ENCODE measurements at regions of chr5 and their contacts with region 1.

Region 1: GRCh38 chr5:137754126-137754960 is at the start of gene HNRNPA0:
- DNase-seq: peak; percentile 95
- ATAC-seq: peak; percentile 82
- H3K4me3 Mint-ChIP-seq: peak within 1 kb of the TSS; percentile 95
- H3K27ac Mint-ChIP-seq: peak within 1 kb of the TSS; percentile 100
- H3K4me1 Mint-ChIP-seq: peaks cover 35% of the 10 kb centered on the region
- H3K27me3 Mint-ChIP-seq: no peaks in the 10 kb centered on the region
- CTCF ChIP-seq: no peak
- total RNA-seq, gene HNRNPA0: 31.2 and 34.7 TPM in 2 replicates

Region 2: DNA sequence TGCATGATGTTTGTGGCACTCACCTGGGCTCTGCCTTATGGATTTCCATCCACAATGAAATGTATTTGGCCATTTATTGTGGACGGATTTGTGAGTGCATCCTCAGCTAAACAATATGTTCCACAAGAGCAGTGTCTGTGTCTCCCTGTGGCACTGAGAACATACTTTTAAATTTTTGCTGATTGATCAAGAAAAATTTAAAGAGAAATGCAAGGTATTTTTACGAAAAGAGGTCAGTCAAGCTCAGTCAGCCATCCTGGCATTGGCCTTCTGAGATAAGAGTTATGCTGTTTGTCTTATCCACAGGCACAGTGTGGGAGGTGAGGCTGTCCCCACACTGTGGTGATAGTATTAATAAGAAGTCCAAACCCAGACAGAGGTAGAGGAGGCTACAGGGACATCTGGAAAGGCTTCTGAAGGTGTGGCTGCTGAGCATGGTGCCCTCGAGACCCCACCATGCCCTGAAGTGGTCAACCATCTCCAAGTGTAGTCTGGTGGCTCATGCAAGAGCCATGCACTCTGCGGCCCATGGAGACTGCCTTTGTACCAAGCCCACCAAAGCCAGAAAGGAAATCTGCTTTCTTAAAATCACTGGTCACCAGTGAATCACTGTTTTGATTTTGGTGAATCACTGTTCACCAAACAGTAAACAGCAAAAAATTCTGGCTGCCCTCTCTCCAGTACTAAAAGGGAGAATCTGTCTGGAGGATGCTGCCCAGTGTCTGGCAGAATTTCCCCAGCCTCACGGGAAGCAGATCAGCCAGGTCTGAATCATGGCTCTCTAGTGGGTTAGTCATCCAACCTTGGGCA is 284.0 kb before region 1 on chr5:
- CTCF ChIA-PET with region 1: no interaction called
- POLR2A ChIA-PET with region 1: no interaction called
- intact Hi-C with region 1: no loop called
- DNase-seq: no peak
- ATAC-seq: no peak
- H3K4me3 Mint-ChIP-seq: no peak overlapping the region
- H3K27ac Mint-ChIP-seq: no peak overlapping the region
- H3K4me1 Mint-ChIP-seq: no peaks in the 10 kb centered on the region
- H3K27me3 Mint-ChIP-seq: peaks cover 23% of the 10 kb centered on the region
- CTCF ChIP-seq: no peak

Region 3: GRCh38 chr5:137743031-137743640 is 11.2 kb before region 1 on chr5:
- CTCF ChIA-PET with region 1: interaction called, 12 read pairs
- POLR2A ChIA-PET with region 1: interaction called, 9 read pairs
- intact Hi-C with region 1: no loop called
- DNase-seq: no peak
- ATAC-seq: peak; percentile 88
- H3K4me3 Mint-ChIP-seq: no peak overlapping the region
- H3K27ac Mint-ChIP-seq: no peak overlapping the region
- H3K4me1 Mint-ChIP-seq: peaks cover 4% of the 10 kb centered on the region
- H3K27me3 Mint-ChIP-seq: no peaks in the 10 kb centered on the region
- CTCF ChIP-seq: no peak

Region 4: GRCh38 chr5:137847687-137848086 is 93.3 kb after region 1 on chr5:
- CTCF ChIA-PET with region 1: no interaction called
- POLR2A ChIA-PET with region 1: no interaction called
- intact Hi-C with region 1: no loop called
- DNase-seq: no peak
- ATAC-seq: no peak
- H3K4me3 Mint-ChIP-seq: no peak overlapping the region
- H3K27ac Mint-ChIP-seq: no peak overlapping the region
- H3K4me1 Mint-ChIP-seq: peaks cover 5% of the 10 kb centered on the region
- H3K27me3 Mint-ChIP-seq: no peaks in the 10 kb centered on the region
- CTCF ChIP-seq: no peak

Region 5: GRCh38 chr5:138024117-138024516 is 269.8 kb after region 1 on chr5:
- CTCF ChIA-PET with region 1: no interaction called
- POLR2A ChIA-PET with region 1: interaction called, 7 read pairs
- intact Hi-C with region 1: loop called (anchors 1 kb)
- DNase-seq: no peak
- ATAC-seq: no peak
- H3K4me3 Mint-ChIP-seq: no peak overlapping the region
- H3K27ac Mint-ChIP-seq: no peak overlapping the region
- H3K4me1 Mint-ChIP-seq: peaks cover 78% of the 10 kb centered on the region
- H3K27me3 Mint-ChIP-seq: no peaks in the 10 kb centered on the region
- CTCF ChIP-seq: no peak

Region 6: DNA sequence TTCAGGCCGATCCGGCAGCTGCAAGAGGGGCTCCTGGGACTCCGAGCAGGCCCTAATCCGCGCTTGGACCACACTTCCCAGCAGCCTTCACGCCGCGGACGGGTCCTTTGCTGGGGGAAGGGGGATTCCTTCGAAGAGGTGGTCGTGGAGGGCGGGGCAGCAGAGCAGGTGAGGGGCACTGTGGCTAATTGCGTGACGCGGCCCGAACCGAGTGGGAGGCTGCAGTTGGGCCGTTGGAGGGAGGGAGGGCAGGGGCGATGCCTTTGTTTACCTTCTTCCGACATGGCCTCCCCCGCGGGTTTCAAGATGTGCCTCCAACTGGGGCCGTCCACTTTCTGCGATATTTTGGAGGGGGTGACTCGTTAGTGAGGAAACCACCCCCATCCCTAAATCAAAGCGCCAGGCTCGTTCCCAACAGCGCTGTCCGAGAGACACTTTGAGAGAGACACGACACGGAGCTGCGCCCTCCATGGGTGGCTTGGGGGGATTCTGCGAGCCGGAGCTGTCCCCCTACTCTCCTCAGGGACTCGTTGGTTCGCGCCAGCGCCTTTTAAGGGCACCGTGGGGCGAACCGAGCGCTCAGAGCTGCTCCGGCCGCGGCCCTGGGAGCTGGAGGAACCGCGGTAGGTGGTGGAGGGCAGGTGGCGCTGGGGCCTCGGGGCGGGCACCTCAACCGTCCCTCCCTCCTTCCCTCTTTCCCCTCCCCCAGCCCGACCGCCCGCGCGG is 583.5 kb after region 1 on chr5 and contains the start of gene FAM53C:
- CTCF ChIA-PET with region 1: no interaction called
- POLR2A ChIA-PET with region 1: interaction called, 8 read pairs
- intact Hi-C with region 1: loop called (anchors 2 kb)
- DNase-seq: peak; percentile 97
- ATAC-seq: peak; percentile 81
- H3K4me3 Mint-ChIP-seq: peak within 1 kb of the TSS; percentile 90
- H3K27ac Mint-ChIP-seq: peak within 1 kb of the TSS; percentile 100
- H3K4me1 Mint-ChIP-seq: peaks cover 37% of the 10 kb centered on the region
- H3K27me3 Mint-ChIP-seq: no peaks in the 10 kb centered on the region
- CTCF ChIP-seq: no peak
- total RNA-seq, gene FAM53C: 23.5 and 24.9 TPM in 2 replicates

Region 7: DNA sequence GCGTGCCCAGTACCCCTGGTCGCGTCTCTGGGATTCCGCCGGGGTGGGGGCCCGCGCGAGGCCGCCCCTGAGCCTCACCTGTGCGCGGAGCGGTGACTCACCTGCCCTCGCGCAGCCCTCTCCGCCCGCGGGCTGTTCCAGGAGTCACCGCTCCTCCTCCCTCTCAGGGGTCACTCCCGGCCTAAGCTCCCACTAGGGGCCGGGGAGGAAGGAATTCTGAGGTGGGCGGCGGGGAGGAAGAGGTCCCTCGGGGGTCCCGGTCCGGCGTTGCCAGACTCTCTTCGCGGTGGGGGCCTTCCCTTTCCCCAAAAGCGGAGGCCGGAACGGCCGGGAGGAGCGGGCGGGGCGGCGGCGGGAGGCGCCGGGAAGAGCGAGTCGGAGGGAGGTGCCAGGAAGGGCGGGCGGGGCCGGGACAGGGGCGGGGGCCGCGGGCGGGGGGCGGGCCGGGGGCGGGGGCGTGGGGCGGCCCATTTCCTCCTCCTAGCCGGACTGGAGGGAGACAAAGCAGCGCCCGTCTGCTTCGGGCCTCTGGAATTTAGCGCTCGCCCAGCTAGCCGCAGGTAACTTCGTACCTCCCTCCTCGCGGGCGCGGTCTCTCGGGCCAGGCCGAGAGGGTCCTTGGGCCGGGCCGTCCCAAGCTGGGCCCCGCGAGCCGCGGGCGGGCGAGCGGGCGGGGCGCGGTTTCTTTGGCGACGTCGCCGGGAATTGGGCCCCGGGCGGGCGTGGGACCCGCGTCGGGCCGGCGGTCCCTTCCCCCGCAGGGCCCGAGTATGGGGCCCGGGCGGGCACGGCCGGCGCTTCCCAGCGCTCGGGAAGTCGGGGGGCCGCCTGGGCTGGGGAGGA is 998.8 kb after region 1 on chr5 and contains the start of gene CTNNA1:
- CTCF ChIA-PET with region 1: no interaction called
- POLR2A ChIA-PET with region 1: no interaction called
- intact Hi-C with region 1: loop called (anchors 10 kb)
- DNase-seq: peak; percentile 72
- ATAC-seq: peak; percentile 77
- H3K4me3 Mint-ChIP-seq: peak within 1 kb of the TSS; percentile 82
- H3K27ac Mint-ChIP-seq: peak within 1 kb of the TSS; percentile 53
- H3K4me1 Mint-ChIP-seq: peaks cover 26% of the 10 kb centered on the region
- H3K27me3 Mint-ChIP-seq: no peaks in the 10 kb centered on the region
- CTCF ChIP-seq: no peak
- total RNA-seq, gene CTNNA1: 76.0 and 77.7 TPM in 2 replicates

Measured in activated B cell treated with CpG ODN at 0.5 μM for 24 hours (primary cell).